ENCODE measurements at regions of chr3 and their contacts with region 1.

Region 1: DNA sequence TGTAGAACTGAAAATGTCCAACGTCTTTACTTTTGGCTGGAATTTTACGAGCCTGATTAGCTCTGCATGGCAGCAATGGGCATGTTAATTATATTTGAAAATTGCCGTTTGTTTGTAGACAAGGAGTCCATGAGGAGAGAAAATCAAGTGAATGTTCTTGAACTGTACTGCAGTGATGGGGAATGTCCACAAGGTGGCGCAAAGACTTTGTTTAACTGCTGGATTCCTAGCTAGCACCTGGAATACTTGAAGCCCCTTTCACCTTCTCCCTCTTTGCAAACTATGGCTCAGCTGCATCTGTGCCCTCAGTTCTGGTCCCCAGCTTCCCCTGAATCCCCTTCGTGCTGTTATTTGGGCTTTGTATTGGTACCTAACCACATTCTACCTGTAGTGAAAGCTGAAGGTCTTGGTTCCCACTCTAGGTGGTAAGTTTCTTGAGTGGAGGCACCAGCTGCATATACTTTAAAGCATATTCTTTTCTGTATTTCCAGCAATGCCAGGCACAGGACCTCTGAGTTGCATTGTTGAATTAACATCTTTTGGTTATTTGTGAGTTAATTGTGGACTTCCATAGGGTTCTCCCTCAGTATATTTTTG is 25.3 kb downstream of the EXOG start:
- DNase-seq: peak; percentile 83
- ATAC-seq: peak; percentile 75
- H3K4me3 Mint-ChIP-seq: no peak overlapping the region
- H3K27ac Mint-ChIP-seq: no peak overlapping the region; the same call in 1 of the 2 replicates
- H3K4me1 Mint-ChIP-seq: peaks cover 36% of the 10 kb centered on the region
- H3K27me3 Mint-ChIP-seq: no peaks in the 10 kb centered on the region
- CTCF ChIP-seq: peak; percentile 89

Region 2: DNA sequence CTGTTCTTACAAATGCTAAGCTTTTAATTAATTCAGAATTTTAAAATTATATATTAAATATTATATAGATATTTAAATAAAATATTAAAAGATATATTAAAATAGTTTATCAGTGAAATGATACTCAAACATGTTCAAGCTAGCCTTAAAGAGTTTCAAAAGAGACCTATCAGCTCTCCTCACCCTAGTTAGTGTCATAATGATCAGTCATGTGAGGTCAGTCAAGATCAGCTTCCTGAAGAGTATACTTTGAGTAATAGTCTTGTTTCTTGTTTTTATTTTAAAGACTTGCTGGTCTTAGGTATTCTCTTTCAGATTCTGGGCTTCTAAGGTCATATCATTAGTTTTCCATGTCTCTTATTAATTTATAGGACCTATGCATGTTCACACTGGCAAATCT is 10.9 kb before region 1 on chr3:
- CTCF ChIA-PET with region 1: interaction called, 10 read pairs
- POLR2A ChIA-PET with region 1: no interaction called
- DNase-seq: no peak
- ATAC-seq: no peak
- H3K4me3 Mint-ChIP-seq: no peak overlapping the region
- H3K27ac Mint-ChIP-seq: no peak overlapping the region
- H3K4me1 Mint-ChIP-seq: no peaks in the 10 kb centered on the region
- H3K27me3 Mint-ChIP-seq: no peaks in the 10 kb centered on the region
- CTCF ChIP-seq: no peak

Region 3: DNA sequence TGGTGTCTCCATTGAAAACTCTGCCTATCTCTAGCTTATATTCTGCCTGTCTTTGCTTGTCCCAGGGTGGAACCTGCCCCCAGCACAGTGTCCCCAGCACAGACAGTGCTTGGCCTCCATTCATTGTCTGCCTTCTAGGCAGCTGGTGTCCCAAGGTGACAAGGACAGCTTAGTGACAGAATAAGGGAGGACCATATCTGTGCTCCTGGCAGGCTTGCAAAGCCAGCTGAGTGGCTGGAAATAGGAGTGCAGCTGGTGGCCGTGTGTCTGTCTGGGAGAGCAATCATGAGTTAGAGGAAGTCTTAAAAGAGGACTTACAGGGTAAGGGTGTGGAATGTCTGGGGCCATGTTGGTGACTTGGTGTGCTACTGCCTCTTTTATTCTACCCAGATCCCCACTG is 94.6 kb after region 1 on chr3:
- CTCF ChIA-PET with region 1: interaction called, 12 read pairs
- POLR2A ChIA-PET with region 1: no interaction called
- DNase-seq: no peak
- ATAC-seq: no peak
- H3K4me3 Mint-ChIP-seq: no peak overlapping the region
- H3K27ac Mint-ChIP-seq: no peak overlapping the region
- H3K4me1 Mint-ChIP-seq: peaks cover 10% of the 10 kb centered on the region; the same call in 1 of the 2 replicates
- H3K27me3 Mint-ChIP-seq: no peaks in the 10 kb centered on the region; the same call in 1 of the 2 replicates
- CTCF ChIP-seq: no peak

Region 4: GRCh38 chr3:38634111-38634510 is 112.6 kb after region 1 on chr3:
- CTCF ChIA-PET with region 1: interaction called, 21 read pairs
- POLR2A ChIA-PET with region 1: no interaction called
- DNase-seq: no peak
- ATAC-seq: no peak
- H3K4me3 Mint-ChIP-seq: no peak overlapping the region
- H3K27ac Mint-ChIP-seq: no peak overlapping the region
- H3K4me1 Mint-ChIP-seq: peaks cover 31% of the 10 kb centered on the region
- H3K27me3 Mint-ChIP-seq: no peaks in the 10 kb centered on the region; the same call in 1 of the 2 replicates
- CTCF ChIP-seq: no peak

Measured in WTC11 (cell line).